ENCODE measurements at regions of chr6 and their contacts with region 1.

Region 1: GRCh38 chr6:44064089-44064947 is 62.9 kb downstream of the MRPL14 start:
- DNase-seq: no peak
- H3K4me3 Mint-ChIP-seq: no peak overlapping the region
- H3K27ac Mint-ChIP-seq: no peak overlapping the region
- H3K4me1 Mint-ChIP-seq: no peaks in the 10 kb centered on the region
- H3K27me3 Mint-ChIP-seq: peaks cover 45% of the 10 kb centered on the region

Region 2: DNA sequence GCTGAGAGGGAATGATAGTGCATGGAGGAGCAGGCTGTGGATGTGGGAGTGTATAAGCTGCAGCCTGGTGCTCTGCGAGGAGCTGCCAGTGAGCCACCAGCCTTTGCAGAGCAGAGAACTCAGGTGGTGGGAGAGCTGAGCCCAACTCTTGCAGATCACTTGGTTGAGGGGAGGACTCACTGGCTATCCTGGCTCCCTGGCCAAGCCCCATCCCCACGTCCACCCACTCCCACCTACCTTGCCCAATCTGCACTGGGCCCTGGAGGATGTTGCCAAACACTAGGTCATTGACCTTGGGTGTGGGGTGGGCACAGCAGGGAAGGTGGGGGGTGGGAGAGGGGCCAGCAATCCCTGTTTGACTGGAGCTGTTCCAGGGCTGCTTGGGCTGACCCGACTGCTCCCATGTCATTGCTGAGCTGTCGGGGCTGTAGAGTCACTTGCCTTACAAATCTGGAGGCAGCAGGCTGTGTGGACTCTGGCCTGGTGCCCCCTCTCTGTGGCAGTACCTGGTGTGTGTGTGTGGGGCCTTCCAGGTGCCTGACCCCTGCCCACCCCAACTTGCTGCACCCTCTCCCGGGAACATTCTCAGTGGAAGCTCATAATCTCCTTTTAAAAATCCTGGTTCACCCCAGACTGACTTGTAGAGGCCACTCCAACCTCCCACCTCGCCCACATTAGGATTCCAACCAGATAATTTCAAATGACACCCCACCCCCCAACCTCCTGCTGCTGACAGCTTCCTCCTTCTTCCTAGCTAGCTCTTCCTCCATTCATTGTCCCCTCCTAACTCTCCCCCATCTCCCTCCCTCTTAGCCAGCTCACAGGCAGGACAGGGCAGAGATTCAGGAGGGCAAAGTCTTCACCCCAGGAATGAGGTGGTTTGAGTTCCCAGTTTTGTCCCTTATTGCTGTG is 99.4 kb before region 1 on chr6:
- CTCF ChIA-PET with region 1: no interaction called
- DNase-seq: no peak
- H3K4me3 Mint-ChIP-seq: no peak overlapping the region
- H3K27ac Mint-ChIP-seq: no peak overlapping the region
- H3K4me1 Mint-ChIP-seq: no peaks in the 10 kb centered on the region
- H3K27me3 Mint-ChIP-seq: peaks cover 39% of the 10 kb centered on the region

Region 3: DNA sequence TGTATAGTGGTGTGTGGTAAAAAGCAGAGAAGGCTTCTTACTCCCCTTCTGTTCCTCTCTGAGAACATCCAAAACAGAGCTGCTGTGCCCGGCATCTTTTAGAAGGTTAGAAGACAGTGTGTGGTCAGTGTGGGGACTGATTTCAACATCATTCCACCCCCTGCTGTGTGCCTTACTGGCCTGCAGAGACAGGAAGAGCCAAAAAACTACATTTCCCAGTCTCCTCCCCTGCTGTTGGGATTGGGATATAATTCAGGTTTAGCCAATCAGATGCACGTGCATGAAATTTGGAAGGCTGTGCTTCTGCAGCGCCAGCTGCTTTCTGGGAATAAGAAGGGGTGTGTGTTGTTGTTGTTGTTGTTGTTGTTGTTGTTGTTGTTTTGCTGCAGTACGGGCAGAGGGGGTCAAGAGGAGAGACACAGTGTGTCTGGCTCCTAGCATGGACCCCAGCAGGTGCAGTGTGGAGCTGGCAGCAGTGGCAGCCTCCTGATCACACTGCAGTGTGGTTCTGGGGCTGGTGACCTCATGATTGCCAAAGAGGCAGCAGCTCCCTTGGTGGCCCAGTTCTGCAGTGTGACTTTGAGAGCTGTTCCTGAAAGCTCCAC is 11.8 kb before region 1 on chr6:
- CTCF ChIA-PET with region 1: interaction called, 24 read pairs
- DNase-seq: peak; percentile 7
- H3K4me3 Mint-ChIP-seq: no peak overlapping the region
- H3K27ac Mint-ChIP-seq: no peak overlapping the region
- H3K4me1 Mint-ChIP-seq: peaks cover 14% of the 10 kb centered on the region
- H3K27me3 Mint-ChIP-seq: peaks cover 32% of the 10 kb centered on the region

Region 4: DNA sequence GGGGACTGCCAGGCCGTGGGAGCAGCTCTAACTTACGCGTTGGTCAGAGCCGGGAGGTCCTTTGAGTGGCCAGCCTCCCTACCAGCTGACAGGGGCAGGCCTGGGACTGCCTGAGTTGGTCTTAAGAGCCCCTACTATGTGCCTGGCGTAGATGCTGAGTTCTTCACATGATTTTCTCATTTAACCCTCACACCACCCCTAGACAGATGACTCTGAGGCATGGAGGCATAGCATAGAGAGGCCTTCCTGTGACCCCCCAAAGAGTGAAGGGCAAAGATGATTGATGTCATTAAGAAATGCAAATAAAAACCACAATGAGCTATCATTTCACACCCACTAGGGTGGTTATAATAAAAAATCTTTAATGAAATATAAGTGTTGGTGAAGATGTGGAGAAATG is 26.1 kb after region 1 on chr6:
- CTCF ChIA-PET with region 1: no interaction called
- DNase-seq: no peak
- H3K4me3 Mint-ChIP-seq: no peak overlapping the region
- H3K27ac Mint-ChIP-seq: no peak overlapping the region
- H3K4me1 Mint-ChIP-seq: no peaks in the 10 kb centered on the region
- H3K27me3 Mint-ChIP-seq: no peaks in the 10 kb centered on the region

Region 5: DNA sequence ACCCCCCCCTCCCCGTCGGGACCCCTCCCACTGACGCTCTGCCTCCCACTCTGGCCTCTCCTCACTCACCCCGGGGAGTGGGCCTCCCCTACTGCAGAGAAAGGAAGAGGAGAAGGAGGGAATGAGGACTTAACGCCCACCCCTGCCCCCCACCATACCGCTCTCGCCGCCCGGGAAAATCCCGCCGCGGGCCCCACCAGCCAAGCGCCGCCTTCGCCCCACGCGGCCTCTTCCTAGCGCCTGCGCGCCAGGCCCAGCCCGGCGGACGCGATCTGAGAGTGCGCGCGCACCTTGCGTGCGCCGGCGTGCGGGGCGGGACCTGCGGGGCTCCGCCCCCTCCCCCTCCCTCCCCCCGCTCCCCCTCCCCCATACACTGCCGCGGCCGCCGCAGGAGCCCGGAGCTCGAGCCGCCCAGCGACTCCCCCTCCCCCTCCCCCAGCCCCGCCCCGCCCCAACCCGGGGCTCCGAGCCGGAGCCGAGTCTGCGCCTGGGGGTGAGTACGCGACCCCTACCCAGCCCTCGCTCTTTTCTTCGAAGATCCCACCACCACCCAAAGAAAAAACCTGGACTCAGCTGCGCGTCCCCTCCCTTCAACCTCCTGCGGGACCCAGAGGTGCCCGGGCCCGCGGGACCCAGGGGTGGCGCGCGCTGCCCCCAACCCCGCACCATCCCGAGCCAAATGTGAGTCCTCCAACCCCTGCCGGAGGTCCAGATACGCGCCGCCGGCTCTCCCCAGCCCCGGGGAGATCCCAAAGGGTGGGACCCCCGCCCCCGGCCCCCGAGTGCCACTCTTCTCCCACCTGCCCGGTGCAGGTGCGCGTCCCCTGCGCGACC is 63.1 kb after region 1 on chr6 and contains the starts of genes MRPL14 and TMEM63B:
- CTCF ChIA-PET with region 1: no interaction called
- DNase-seq: peak; percentile 89
- H3K4me3 Mint-ChIP-seq: peak within 1 kb of the TSS; percentile 88
- H3K27ac Mint-ChIP-seq: peak within 1 kb of the TSS; percentile 94
- H3K4me1 Mint-ChIP-seq: peaks cover 61% of the 10 kb centered on the region
- H3K27me3 Mint-ChIP-seq: peaks cover 7% of the 10 kb centered on the region